Activated naive CD8-positive, alpha-beta T cell treated with anti-CD3 and anti-CD28 coated beads, Interleukin-2, amount 10 ng/mL, durations not matched to agents 7 days and 5 days (primary cell): ENCODE measurements at regions of chr17 and their contacts with region 1.

Region 1: GRCh38 chr17:8173056-8173870 is 2.9 kb downstream of the TMEM107 start:
- DNase-seq: no peak
- ATAC-seq: peak; percentile 84
- H3K4me3 Mint-ChIP-seq: peak overlapping the region; percentile 84
- H3K27ac Mint-ChIP-seq: peak overlapping the region; percentile 97
- H3K4me1 Mint-ChIP-seq: peaks cover 28% of the 10 kb centered on the region
- H3K27me3 Mint-ChIP-seq: no peaks in the 10 kb centered on the region

Region 2: DNA sequence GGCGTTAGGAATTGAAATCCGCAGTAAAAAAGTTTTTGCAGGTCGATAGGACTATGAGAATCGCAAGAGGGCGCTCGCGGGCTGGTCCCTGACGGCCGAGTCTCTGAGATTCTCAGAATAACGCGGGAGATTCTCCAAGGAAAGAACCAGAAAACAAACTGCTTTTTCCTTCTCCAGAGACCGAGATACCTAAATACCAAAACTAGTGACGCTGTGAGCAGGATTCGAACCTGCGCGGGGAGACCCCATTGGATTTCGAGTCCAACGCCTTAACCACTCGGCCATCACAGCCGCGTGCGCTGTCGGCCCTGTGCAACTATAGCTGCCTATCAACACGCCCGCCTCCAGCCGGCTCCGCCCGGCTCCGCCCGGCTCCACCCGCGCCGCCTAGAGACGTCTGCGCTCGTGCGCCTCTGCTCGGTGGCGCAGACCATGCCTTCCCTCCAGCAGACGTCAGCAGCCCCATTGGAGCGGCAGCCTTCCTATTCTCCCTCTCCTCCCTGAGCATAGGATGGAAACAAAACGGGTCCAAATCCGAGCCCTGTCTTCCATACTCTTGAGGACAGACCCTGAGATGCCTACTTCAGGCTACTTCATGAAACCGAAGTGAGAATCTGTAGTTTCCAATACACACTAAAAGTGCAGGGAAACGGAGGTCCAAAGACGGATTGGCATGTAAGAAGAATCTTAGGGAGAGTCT is 34.4 kb before region 1 on chr17:
- POLR2A ChIA-PET with region 1: interaction called, 22 read pairs
- DNase-seq: peak; percentile 97
- ATAC-seq: peak; percentile 97
- H3K4me3 Mint-ChIP-seq: no peak overlapping the region
- H3K27ac Mint-ChIP-seq: no peak overlapping the region
- H3K4me1 Mint-ChIP-seq: peaks cover 4% of the 10 kb centered on the region
- H3K27me3 Mint-ChIP-seq: peaks cover 6% of the 10 kb centered on the region

Region 3: GRCh38 chr17:8162233-8162996 is 10.8 kb before region 1 on chr17 and contains the start of gene VAMP2:
- POLR2A ChIA-PET with region 1: interaction called, 384 read pairs
- DNase-seq: peak; percentile 95
- ATAC-seq: peak; percentile 41
- H3K4me3 Mint-ChIP-seq: peak within 1 kb of the TSS; percentile 88
- H3K27ac Mint-ChIP-seq: peak within 1 kb of the TSS; percentile 100
- H3K4me1 Mint-ChIP-seq: peaks cover 47% of the 10 kb centered on the region
- H3K27me3 Mint-ChIP-seq: no peaks in the 10 kb centered on the region
- total RNA-seq, gene VAMP2: 116 to 118 TPM

Region 4: DNA sequence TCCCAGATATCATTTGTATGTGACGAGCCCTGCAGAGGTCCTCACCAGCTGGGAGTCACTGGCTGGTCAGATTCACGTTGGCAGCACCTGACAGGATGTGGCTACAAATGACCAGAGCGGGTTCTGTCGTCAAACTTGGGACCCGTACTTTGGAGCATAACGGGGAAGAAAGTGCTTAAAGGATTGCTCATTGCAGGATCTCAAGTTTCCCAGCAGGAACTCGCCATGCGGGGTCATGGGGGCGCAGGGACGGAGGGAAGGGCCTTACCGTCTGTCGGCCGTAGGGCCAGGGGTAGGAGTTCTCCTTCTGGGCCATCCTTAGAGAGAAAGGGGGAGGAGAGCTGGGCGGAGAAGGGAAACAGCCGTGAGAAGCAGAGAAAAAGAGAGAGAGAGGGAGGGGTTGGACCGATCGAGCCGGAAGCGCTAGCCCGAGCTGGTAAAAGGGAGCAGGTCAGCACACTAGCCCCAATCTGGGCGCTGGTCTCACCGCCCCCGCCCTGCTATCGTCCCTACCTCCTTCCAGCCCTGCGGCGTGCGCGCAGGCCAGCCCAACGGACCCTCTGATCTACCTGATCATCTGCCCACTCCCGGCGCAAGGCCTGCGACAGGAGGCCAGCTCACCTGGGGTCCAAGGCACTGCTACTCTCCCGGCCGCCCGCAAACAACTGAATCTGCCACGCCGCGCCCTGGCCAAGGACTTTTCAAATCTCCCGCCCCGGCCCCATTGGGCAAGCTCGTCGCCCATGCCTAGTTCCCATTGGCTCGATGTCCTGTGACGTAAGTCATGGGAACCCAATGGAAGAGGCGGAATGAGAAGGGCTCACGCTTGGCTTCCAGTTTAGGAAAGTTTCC is 36.9 kb after region 1 on chr17 and contains the start of gene AURKB:
- POLR2A ChIA-PET with region 1: interaction called, 22 read pairs
- DNase-seq: peak; percentile 87
- ATAC-seq: peak; percentile 97
- H3K4me3 Mint-ChIP-seq: peak within 1 kb of the TSS; percentile 96
- H3K27ac Mint-ChIP-seq: peak within 1 kb of the TSS; percentile 92
- H3K4me1 Mint-ChIP-seq: peaks cover 27% of the 10 kb centered on the region
- H3K27me3 Mint-ChIP-seq: peaks cover 3% of the 10 kb centered on the region
- total RNA-seq, gene AURKB: 128 to 152 TPM

Region 5: DNA sequence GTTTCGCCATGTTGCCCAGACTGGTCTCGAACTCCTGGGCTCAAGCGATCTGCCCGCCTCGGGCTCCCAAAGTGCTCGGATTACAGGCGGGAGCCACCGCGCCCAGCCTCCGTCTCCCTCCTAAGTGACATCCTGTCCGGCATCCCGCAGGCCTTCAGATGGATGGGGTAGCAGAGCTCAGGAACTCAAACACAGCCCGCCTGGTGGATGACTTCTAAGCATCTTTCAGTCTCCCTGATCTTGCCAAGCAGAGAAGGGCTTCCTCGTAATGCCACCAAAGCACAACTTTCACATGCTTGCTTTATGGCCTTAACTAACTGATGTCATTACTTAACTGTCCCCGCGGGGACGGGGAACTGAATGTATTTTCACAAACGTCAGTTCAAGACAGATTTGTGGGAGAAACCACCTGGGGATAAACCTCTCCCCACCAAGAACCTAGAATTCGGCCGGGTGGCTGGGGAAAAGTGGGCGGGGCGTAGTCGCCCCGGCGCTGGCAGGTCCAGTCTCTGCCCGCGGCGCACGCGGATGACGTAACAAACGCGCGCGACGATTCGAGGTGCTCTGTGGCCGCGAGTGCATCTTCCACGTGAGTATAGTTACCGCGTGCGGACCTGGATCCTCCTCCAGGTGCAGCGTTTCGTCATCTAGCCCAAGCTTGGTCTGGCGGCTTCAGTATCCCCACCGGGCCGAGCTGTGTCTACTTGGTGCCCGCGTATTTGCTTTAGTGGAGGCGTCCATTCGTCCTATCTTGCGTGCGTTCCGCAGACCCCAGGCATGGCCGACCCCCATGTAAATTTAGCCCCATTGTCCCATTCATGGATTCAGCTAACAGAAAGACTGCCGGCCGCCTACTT is 75.7 kb after region 1 on chr17 and contains the start of gene PFAS:
- POLR2A ChIA-PET with region 1: interaction called, 31 read pairs
- DNase-seq: peak; percentile 99
- ATAC-seq: peak; percentile 68
- H3K4me3 Mint-ChIP-seq: peak within 1 kb of the TSS; percentile 99
- H3K27ac Mint-ChIP-seq: peak within 1 kb of the TSS; percentile 99
- H3K4me1 Mint-ChIP-seq: peaks cover 30% of the 10 kb centered on the region
- H3K27me3 Mint-ChIP-seq: no peaks in the 10 kb centered on the region
- total RNA-seq, gene PFAS: 47.2 to 56.8 TPM

Region 6: GRCh38 chr17:8264836-8265542 is 91.7 kb after region 1 on chr17:
- POLR2A ChIA-PET with region 1: no interaction called
- DNase-seq: no peak
- ATAC-seq: no peak
- H3K4me3 Mint-ChIP-seq: no peak overlapping the region
- H3K27ac Mint-ChIP-seq: no peak overlapping the region
- H3K4me1 Mint-ChIP-seq: no peaks in the 10 kb centered on the region
- H3K27me3 Mint-ChIP-seq: no peaks in the 10 kb centered on the region